ENCODE measurements at regions of chr14 and their contacts with region 1.

Region 1: GRCh38 chr14:54253195-54253947 is 143.4 kb upstream of the CDKN3 start:
- DNase-seq: peak; percentile 99
- ATAC-seq: peak; percentile 59
- H3K4me3 ChIP-seq: 0 out of 2 replicates have a peak overlapping the region, but pooled peaks have one; percentile 37
- H3K27ac ChIP-seq: peak overlapping the region; percentile 91
- H3K4me1 ChIP-seq: peaks cover 43% of the 10 kb centered on the region
- H3K27me3 ChIP-seq: no peaks in the 10 kb centered on the region
- CTCF ChIP-seq: no peak

Region 2: GRCh38 chr14:53539489-53540126 is 713.8 kb before region 1 on chr14:
- CTCF ChIA-PET with region 1: no interaction called
- POLR2A ChIA-PET with region 1: no interaction called
- intact Hi-C with region 1: loop called (anchors 2 kb)
- DNase-seq: peak; percentile 92
- ATAC-seq: peak; percentile 62
- H3K4me3 ChIP-seq: no peak overlapping the region
- H3K27ac ChIP-seq: peak overlapping the region; percentile 3; the same call in 1 of the 2 replicates
- H3K4me1 ChIP-seq: peaks cover 26% of the 10 kb centered on the region
- H3K27me3 ChIP-seq: no peaks in the 10 kb centered on the region
- CTCF ChIP-seq: peak; percentile 98

Region 3: GRCh38 chr14:54108481-54109471 is 144.6 kb before region 1 on chr14:
- CTCF ChIA-PET with region 1: interaction called, 4 read pairs
- POLR2A ChIA-PET with region 1: interaction called, 7 read pairs
- intact Hi-C with region 1: loop called (anchors 1 kb)
- DNase-seq: peak; percentile 100
- ATAC-seq: peak; percentile 56
- H3K4me3 ChIP-seq: peak overlapping the region; percentile 6; the same call in 1 of the 2 replicates
- H3K27ac ChIP-seq: peak overlapping the region; percentile 88
- H3K4me1 ChIP-seq: peaks cover 75% of the 10 kb centered on the region
- H3K27me3 ChIP-seq: no peaks in the 10 kb centered on the region
- CTCF ChIP-seq: no peak

Region 4: DNA sequence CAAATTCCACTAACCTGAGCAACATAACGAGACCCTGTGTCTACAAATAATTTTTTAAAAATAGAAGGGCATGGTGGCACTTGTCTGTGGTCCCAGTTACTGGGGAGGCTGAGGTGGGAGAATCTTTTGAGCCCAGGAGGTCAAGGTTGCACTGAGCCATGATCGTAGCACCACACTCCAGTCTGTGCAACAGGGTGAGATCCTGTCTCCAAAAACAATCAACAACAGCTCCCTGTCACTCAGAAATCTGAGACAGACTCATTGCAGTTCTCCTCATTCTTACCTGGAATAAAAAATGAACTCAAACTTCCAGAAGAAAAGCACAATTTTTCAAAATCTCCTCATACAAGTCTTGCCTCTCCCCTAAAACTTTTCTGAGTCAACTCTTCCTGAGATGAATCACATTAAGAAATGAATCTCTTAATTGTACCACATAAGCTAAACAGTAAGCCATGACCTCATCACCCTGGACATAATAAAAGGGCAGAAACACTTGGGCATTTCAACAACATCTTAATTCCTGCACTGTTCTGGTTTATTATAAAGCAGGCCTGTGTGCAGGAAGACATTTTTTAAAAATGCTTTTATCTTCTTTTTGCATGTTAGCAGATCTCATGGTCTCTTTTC is 70.8 kb before region 1 on chr14:
- CTCF ChIA-PET with region 1: interaction called, 4 read pairs
- POLR2A ChIA-PET with region 1: no interaction called
- intact Hi-C with region 1: loop called (anchors 1 kb)
- DNase-seq: peak; percentile 96
- ATAC-seq: peak; percentile 82
- H3K4me3 ChIP-seq: no peak overlapping the region
- H3K27ac ChIP-seq: peak overlapping the region; percentile 73
- H3K4me1 ChIP-seq: peaks cover 27% of the 10 kb centered on the region
- H3K27me3 ChIP-seq: no peaks in the 10 kb centered on the region
- CTCF ChIP-seq: no peak

Region 5: DNA sequence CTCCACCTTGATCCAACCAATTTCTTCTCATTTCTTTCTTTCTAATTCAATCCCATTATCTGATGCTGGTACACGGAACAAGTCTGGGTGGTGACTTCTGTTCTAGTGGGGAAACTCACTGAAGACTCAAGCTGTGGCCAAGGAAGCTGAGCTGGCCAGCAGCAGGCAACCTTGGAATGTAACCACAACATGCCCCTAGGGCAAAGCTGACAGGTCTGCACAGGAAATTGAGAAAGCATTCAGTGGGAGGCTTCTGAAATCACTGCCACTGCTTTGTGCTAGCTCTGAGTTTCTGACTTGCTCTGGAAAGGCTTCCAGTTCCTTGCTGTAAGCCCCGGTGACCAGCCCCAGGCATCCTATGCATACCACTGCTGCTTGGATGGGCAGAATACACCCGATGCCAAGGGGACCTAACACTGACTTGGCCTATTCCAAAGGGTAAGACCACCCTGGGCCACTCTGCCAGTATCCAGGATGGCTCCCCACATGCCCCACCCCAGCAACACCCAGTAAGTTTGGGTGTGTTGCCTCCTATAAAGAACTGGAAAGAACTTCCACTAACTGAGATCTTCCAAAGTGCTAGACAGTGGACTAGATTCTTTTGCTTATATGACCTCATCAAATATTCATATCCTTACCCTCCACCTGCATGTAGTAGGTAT is 58.9 kb after region 1 on chr14:
- CTCF ChIA-PET with region 1: interaction called, 9 read pairs
- POLR2A ChIA-PET with region 1: interaction called, 9 read pairs
- intact Hi-C with region 1: loop called (anchors 1 kb)
- DNase-seq: peak; percentile 100
- ATAC-seq: peak; percentile 93
- H3K4me3 ChIP-seq: peak overlapping the region; percentile 3; the same call in 1 of the 2 replicates
- H3K27ac ChIP-seq: peak overlapping the region; percentile 66
- H3K4me1 ChIP-seq: peaks cover 53% of the 10 kb centered on the region
- H3K27me3 ChIP-seq: no peaks in the 10 kb centered on the region
- CTCF ChIP-seq: no peak

Region 6: DNA sequence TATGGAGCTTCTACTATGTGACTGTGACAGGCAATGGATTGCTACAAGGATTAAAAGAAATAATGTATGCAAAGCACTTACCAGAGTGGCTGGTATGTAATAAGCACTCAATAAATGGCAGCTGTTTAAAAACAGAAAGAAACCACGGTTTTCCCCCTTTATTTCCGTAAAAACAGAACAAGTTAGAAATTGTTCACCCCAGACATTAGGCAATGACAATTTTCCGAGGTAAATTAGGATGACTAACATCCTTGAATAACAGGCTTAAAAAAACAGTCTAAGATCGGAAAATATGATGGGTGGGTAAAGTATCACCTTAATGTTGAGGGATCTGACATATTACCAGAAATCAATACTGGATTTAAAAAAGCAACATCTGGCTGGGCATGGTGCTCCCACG is 208.7 kb after region 1 on chr14:
- CTCF ChIA-PET with region 1: no interaction called
- POLR2A ChIA-PET with region 1: no interaction called
- intact Hi-C with region 1: no loop called
- DNase-seq: peak; percentile 37
- ATAC-seq: no peak
- H3K4me3 ChIP-seq: no peak overlapping the region
- H3K27ac ChIP-seq: no peak overlapping the region
- H3K4me1 ChIP-seq: no peaks in the 10 kb centered on the region
- H3K27me3 ChIP-seq: no peaks in the 10 kb centered on the region
- CTCF ChIP-seq: no peak

Region 7: DNA sequence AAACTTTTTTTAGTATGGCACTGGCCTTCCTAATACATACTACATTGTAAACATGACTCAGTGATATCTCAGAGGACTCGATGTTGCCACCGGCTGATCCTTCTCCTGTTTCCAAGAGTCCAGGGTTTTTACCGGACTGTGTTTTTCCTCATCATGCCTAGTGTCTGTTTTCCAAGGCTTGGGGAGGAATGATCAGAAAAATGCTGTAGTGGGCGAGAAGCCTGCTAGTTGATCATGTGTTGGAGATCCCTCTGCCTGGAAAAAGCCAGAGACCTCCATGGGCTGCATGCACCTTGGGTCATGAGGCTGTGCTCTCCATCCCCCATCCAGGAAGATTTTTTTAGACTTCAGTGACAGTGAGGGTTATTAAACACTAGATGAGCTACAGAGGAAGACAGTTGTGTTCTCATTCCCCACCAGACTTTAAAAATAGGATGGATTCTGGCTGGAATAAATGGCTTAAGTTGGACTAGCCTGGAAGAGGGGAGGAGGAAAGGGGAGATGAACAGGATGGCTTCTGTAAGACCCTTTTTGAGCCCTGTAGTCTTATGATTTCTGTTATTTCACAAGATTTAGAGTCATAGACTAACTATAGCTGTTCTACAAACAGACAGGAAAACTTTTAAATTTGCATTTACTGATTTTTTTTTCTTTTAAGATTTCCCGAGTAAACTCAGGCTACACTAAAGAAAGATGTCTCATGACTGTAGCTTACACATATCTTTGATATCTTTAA is 459.3 kb after region 1 on chr14:
- CTCF ChIA-PET with region 1: no interaction called
- POLR2A ChIA-PET with region 1: no interaction called
- intact Hi-C with region 1: loop called (anchors 5 kb)
- DNase-seq: peak; percentile 62
- ATAC-seq: peak; percentile 84
- H3K4me3 ChIP-seq: no peak overlapping the region
- H3K27ac ChIP-seq: no peak overlapping the region
- H3K4me1 ChIP-seq: peaks cover 12% of the 10 kb centered on the region
- H3K27me3 ChIP-seq: no peaks in the 10 kb centered on the region
- CTCF ChIP-seq: no peak